ENCODE measurements at regions of chr17 and their contacts with region 1.

Region 1: GRCh38 chr17:30413109-30413508 is 34.4 kb downstream of the CPD start:
- DNase-seq: no peak
- H3K4me3 ChIP-seq: no peak overlapping the region
- H3K27ac ChIP-seq: no peak overlapping the region
- H3K4me1 ChIP-seq: 0 out of 2 replicates have a peak, but pooled peaks cover 3% of the 10 kb centered on the region
- H3K27me3 ChIP-seq: no peaks in the 10 kb centered on the region
- CTCF ChIP-seq: no peak

Region 2: DNA sequence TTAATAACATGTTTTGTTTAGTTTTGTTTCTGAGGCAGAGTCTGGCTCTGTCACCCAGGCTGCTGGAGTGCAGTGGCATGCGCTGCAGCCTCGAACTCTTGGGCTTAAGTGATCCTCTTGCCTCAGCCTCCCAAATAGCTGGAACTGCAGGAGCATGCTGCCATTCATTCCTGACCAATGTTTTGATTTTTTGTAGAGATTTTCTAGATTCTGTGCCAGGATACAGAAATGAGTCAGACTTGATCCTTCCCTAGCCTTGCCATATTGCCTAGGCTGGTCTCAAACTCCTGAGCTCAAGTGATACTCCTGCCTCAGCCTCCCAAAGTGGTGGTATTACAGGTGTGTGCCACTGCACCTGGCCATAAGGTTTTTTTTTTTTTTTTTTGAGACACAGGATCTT is 1005.3 kb before region 1 on chr17:
- CTCF ChIA-PET with region 1: interaction called, 11 read pairs
- POLR2A ChIA-PET with region 1: no interaction called
- intact Hi-C with region 1: no loop called
- DNase-seq: no peak
- H3K4me3 ChIP-seq: no peak overlapping the region
- H3K27ac ChIP-seq: no peak overlapping the region
- H3K4me1 ChIP-seq: peaks cover 6% of the 10 kb centered on the region; the same call in 1 of the 2 replicates
- H3K27me3 ChIP-seq: no peaks in the 10 kb centered on the region
- CTCF ChIP-seq: no peak

Region 3: DNA sequence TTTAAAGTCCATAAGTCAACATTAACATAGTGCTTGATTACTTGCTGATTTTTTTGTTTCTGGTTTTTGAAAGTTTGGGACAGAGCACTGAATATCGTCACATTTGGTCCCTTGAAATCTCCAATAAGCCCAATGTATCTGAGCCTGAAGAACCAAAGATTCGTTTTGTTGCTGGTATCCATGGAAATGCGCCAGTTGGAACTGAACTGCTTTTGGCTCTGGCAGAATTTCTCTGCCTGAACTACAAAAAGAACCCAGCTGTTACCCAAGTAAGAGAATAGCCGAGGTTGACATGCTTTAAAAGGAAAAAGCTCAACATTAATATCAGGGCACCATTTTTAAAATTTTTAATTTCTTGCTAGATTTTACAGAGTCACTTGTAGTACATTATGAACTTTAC is 36.4 kb after region 1 on chr17:
- CTCF ChIA-PET with region 1: no interaction called
- POLR2A ChIA-PET with region 1: no interaction called
- intact Hi-C with region 1: no loop called
- DNase-seq: no peak
- H3K4me3 ChIP-seq: no peak overlapping the region
- H3K27ac ChIP-seq: no peak overlapping the region
- H3K4me1 ChIP-seq: peaks cover 29% of the 10 kb centered on the region
- H3K27me3 ChIP-seq: no peaks in the 10 kb centered on the region
- CTCF ChIP-seq: no peak

Region 4: GRCh38 chr17:32386844-32387243 is 1973.7 kb after region 1 on chr17:
- CTCF ChIA-PET with region 1: no interaction called
- POLR2A ChIA-PET with region 1: interaction called, 19 read pairs
- intact Hi-C with region 1: no loop called
- DNase-seq: no peak
- H3K4me3 ChIP-seq: no peak overlapping the region
- H3K27ac ChIP-seq: no peak overlapping the region
- H3K4me1 ChIP-seq: no peaks in the 10 kb centered on the region
- H3K27me3 ChIP-seq: no peaks in the 10 kb centered on the region
- CTCF ChIP-seq: no peak

Measured in PC-9 (cell line).